ENCODE measurements at regions of chr19 and their contacts with region 1.

Region 1: DNA sequence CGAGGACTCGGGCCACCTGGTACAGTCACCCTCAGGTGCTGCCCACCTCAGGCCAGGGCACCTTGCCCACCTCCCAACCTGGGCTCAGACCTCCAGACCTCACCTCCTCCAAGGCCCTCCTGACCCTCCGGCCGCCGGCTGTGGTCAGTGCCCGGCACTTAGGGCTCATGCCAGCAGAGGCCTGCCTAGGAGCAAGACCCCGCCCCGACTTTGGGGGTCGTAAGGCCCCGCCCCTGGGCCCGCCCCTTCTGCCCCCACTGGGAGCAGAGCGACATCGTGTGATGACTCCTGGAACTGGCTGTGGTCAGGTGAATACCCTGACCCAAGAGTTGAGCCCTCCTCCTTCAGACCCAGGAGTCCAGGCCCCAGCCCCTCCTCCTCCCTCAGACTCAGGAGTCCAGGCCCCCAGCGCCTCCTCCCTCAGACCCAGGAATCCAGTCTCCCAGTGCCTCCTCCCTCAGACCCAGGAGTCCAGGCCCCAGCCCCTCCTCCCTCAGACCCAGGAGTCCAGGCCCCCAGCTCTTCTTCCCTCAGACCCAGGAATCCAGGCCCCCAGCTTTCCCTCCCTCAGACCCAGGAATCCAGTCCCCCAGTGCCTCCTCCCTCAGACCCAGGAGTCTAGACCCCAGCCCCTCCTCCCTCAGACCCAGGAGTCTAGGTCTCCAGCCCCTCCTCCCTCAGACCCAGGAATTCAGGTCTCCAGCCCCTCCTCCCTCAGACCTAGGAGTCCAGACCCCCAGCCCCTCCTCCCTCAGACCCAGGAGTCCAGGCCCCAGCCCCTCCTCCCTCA is at the start of gene SBK2:
- DNase-seq: no peak
- H3K4me3 ChIP-seq: no peak within 1 kb of the TSS
- H3K27ac ChIP-seq: no peak within 1 kb of the TSS
- H3K4me1 ChIP-seq: no peaks in the 10 kb centered on the region
- H3K27me3 ChIP-seq: peaks cover 7% of the 10 kb centered on the region
- CTCF ChIP-seq: no peak
- POLR2A ChIP-seq: no peak
- total RNA-seq, gene SBK2: not detected

Region 2: DNA sequence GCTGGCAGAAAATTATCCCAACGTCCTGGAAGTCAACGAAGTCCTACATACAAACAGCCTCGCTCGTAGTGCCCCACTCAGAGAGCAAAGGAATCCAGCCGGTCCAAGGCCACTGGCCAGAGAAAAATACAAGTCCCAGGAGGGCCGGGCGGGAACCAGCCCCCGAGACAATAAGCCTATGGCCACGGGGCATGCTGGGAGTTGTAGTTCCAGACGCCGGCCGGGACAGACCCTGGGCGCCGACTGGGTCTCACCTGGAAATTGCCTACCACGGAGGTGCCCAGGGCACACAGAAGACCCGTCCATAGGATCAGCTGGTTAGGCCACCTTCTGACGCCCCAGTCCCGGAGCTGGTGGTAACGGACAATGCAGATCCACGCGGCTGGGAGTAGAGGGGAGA is 217.4 kb before region 1 on chr19:
- intact Hi-C with region 1: no loop called
- DNase-seq: peak in 2 of 7 donors; percentile 41 to 48
- H3K4me3 ChIP-seq: no peak overlapping the region
- H3K27ac ChIP-seq: no peak overlapping the region
- H3K4me1 ChIP-seq: no peaks in the 10 kb centered on the region
- H3K27me3 ChIP-seq: no peaks in the 10 kb centered on the region
- CTCF ChIP-seq: no peak
- POLR2A ChIP-seq: no peak

Region 3: DNA sequence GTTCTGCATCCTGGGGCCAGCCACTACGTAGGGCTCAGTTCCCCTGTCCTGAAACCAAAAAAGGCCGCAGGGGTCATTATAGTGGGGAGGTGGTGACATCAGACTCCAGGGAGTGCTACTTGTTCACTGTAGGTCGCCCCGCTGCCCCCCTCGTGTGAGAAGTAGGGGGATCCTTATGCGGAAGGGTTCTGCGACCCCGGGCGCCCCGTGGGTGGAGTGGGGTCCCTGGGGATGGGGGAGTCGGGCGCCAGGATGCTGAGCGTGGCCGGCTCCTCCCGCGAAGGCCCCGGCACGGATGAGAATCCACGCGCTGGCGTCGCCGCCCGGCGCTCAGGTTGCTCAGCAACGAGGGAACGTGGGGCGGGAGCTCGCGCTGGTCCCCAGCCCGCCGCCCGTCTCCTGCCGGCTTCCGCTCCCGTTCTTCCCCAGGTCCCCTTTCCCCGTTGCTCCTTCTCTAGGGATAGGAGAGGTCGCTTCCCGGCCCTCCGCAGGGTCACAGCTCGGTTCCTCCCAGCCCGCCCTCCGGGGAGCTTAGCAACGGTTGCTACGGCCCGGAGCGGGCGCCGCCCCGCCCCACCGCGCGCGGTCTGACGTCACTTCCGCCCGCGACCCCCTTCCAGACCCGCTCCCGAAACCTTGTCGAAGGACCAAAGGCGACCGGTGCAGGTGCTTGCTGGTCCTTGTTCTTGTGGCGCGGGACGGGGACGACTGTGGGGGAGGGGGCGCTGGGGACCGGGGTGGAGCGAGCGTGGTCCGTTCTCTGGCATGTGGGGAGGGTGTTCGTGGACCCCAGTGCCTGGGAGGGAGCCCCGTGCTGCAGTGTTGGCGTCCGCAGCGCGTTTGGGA is 52.3 kb before region 1 on chr19 and contains the start of gene NAT14:
- intact Hi-C with region 1: no loop called
- DNase-seq: peak in 6 of 7 donors; percentile 49 to 66 (median 56)
- H3K4me3 ChIP-seq: peak within 1 kb of the TSS in 3 of 4 donors; percentile 37 to 73 (median 54)
- H3K27ac ChIP-seq: peak within 1 kb of the TSS; percentile 76 to 97 (median 93)
- H3K4me1 ChIP-seq: peaks cover 38 to 39% of the 10 kb centered on the region in 2 donors
- H3K27me3 ChIP-seq: no peaks in the 10 kb centered on the region
- CTCF ChIP-seq: no peak
- POLR2A ChIP-seq: no peak
- total RNA-seq, gene NAT14: 4.9 to 46.7 (median 18.3) TPM

Region 4: DNA sequence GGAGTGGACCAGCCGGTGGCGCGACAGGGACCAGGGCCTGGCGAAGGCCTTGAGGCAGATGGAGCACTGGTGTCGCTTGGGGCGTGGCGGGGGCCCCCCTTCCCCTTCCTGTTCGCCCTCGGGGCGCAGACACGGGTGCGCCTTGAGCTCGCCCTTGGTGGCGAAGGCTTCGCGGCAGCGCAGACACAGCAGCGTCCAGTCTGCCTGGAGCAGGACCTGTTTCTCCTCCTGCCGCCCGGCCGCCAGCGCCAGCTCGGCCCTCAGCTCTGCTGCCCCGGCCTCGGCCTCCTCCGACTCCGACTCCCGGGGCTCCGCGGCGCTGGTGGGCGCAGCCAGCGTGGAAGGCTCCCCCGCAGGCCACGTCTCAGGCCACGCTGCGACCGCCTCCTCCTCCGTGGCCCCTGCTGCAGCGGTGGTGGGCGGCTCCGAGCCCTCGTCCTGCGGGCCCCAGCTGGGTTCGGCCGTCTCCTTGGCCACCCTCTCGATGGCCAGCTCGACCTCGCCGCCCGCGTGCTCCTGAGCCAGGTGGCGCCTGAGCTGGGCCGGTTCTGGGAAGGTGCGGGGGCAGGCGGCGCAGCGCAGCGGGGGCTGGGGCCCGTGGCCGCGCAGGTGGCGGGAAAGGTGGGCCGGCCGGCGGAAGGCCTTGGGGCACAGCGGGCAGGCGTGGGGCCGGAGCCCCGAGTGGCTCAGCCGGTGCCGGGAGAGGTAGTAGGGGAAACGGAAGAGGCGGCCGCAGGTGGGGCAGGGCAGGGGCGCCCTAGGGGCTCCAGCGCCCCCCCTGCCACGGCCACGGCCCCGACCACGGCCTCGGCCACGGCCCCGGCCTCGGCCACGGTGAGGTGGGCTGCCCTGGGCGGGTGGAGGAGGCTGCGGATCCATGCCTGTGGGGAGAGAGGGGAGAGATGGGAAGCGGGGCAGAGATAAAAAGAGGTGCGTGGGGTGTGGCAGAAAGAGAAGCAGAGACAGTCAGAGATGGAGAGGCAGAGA is 41.9 kb after region 1 on chr19:
- intact Hi-C with region 1: loop called in 1 of 2 experiments (anchors 5 kb)
- DNase-seq: no peak
- H3K4me3 ChIP-seq: no peak overlapping the region
- H3K27ac ChIP-seq: peak overlapping the region in 1 of 5 donors; percentile 83
- H3K4me1 ChIP-seq: peaks cover 12% of the 10 kb centered on the region in 2 donors
- H3K27me3 ChIP-seq: no peaks in the 10 kb centered on the region
- CTCF ChIP-seq: no peak
- POLR2A ChIP-seq: no peak